HepG2 (cell line): ENCODE measurements at regions of chr2 and their contacts with region 1.

Region 1: DNA sequence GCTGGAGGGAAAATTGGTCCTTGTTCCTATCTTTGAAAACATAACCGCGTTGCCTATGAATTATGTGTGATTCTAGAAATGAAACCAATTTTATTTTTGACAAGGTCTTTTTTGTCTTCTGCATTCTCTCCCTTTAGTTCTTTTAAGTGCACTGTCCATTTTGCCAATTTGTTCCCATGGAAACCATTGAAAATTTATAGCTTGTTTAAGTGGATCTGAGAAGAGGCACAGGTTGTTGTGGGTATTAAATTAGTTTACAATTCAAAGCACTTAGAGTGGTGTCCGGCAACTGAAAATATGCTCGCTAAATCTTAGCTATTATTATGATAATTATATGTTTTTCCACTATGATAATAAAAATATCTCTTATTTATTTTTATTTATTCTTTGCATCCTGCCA is 107.5 kb upstream of the FSHR start:
- DNase-seq: no peak
- ATAC-seq: no peak
- H3K4me3 ChIP-seq: no peak overlapping the region
- H3K27ac ChIP-seq: no peak overlapping the region
- H3K4me1 ChIP-seq: no peaks in the 10 kb centered on the region
- H3K27me3 ChIP-seq: no peaks in the 10 kb centered on the region
- CTCF ChIP-seq: no peak
- EP300 ChIP-seq: no peak
- POLR2A ChIP-seq: no peak
- RAD21 ChIP-seq: no peak

Region 2: DNA sequence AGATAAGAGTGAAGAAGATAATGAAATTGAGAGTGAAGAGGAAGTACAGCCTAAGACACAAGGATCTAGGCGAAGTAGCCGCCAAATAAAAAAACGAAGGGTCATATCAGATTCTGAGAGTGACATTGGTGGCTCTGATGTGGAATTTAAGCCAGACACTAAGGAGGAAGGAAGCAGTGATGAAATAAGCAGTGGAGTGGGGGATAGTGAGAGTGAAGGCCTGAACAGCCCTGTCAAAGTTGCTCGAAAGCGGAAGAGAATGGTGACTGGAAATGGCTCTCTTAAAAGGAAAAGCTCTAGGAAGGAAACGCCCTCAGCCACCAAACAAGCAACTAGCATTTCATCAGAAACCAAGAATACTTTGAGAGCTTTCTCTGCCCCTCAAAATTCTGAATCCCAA is 1463.2 kb before region 1 on chr2:
- CTCF ChIA-PET with region 1: no interaction called
- POLR2A ChIA-PET with region 1: no interaction called
- in situ Hi-C with region 1: no loop called
- intact Hi-C with region 1: no loop called
- DNase-seq: no peak
- ATAC-seq: no peak
- H3K4me3 ChIP-seq: no peak overlapping the region
- H3K27ac ChIP-seq: no peak overlapping the region
- H3K4me1 ChIP-seq: no peaks in the 10 kb centered on the region
- H3K27me3 ChIP-seq: no peaks in the 10 kb centered on the region
- CTCF ChIP-seq: no peak
- EP300 ChIP-seq: no peak
- POLR2A ChIP-seq: no peak
- RAD21 ChIP-seq: no peak

Region 3: DNA sequence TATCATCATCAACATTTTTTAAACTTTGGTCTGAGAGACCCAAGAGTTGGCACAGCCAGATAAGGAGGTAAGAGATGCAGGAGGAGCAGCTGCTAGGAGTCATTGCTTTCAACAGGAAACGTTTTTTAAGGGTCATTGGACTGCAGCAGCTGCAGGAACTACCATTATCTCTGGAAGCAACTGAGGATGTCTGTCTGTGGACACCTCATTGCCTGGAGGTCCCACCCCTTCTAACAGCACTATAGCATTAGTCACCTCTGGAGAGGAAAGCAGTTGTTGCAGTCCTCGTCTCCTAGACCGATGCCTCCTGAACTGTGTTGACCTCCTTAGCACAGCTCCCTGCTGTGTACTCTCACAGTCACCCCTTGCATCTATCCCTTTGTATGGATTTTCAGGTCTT is 86.0 kb before region 1 on chr2:
- CTCF ChIA-PET with region 1: no interaction called
- POLR2A ChIA-PET with region 1: no interaction called
- in situ Hi-C with region 1: no loop called
- intact Hi-C with region 1: no loop called
- DNase-seq: no peak
- ATAC-seq: no peak
- H3K4me3 ChIP-seq: no peak overlapping the region
- H3K27ac ChIP-seq: no peak overlapping the region
- H3K4me1 ChIP-seq: no peaks in the 10 kb centered on the region
- H3K27me3 ChIP-seq: no peaks in the 10 kb centered on the region
- CTCF ChIP-seq: no peak
- EP300 ChIP-seq: no peak
- POLR2A ChIP-seq: no peak
- RAD21 ChIP-seq: no peak

Region 4: GRCh38 chr2:49226360-49226759 is 35.4 kb before region 1 on chr2:
- CTCF ChIA-PET with region 1: no interaction called
- POLR2A ChIA-PET with region 1: no interaction called
- in situ Hi-C with region 1: no loop called
- intact Hi-C with region 1: loop called (anchors 1 kb)
- DNase-seq: no peak
- ATAC-seq: no peak
- H3K4me3 ChIP-seq: no peak overlapping the region
- H3K27ac ChIP-seq: no peak overlapping the region
- H3K4me1 ChIP-seq: no peaks in the 10 kb centered on the region
- H3K27me3 ChIP-seq: no peaks in the 10 kb centered on the region
- CTCF ChIP-seq: no peak
- EP300 ChIP-seq: no peak
- POLR2A ChIP-seq: no peak
- RAD21 ChIP-seq: no peak